ENCODE measurements at regions of chr3 and their contacts with region 1.

Region 1: GRCh38 chr3:149352556-149352955 is 19.1 kb upstream of the TM4SF18 start:
- DNase-seq: no peak
- H3K4me3 ChIP-seq: no peak overlapping the region
- CTCF ChIP-seq: peak; percentile 73

Region 2: DNA sequence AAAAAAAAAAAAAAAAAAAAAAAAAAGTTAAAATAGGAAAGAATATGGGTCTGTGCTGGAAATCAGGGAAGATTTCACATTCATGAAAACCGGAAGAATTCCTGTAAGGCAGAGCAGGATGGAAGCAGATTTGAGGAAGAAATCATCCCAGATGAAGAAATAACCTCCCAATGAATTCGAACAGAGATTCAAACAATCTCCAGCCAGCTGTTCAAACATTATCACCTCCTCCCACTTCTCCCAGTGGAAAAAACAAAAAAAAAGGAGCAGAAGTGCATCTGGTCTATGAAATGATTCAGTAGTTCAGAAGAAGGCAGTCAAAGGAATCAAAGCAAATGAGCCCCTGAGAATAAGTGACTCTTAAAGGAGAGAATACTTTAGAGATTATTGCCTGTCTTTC is 164.1 kb before region 1 on chr3:
- CTCF ChIA-PET with region 1: no interaction called
- POLR2A ChIA-PET with region 1: no interaction called
- DNase-seq: no peak
- H3K4me3 ChIP-seq: no peak overlapping the region
- CTCF ChIP-seq: no peak

Region 3: GRCh38 chr3:149330609-149331331 is 21.8 kb before region 1 on chr3:
- CTCF ChIA-PET with region 1: interaction called, 17 read pairs
- POLR2A ChIA-PET with region 1: no interaction called
- DNase-seq: no peak
- H3K4me3 ChIP-seq: no peak overlapping the region
- CTCF ChIP-seq: no peak

Region 4: DNA sequence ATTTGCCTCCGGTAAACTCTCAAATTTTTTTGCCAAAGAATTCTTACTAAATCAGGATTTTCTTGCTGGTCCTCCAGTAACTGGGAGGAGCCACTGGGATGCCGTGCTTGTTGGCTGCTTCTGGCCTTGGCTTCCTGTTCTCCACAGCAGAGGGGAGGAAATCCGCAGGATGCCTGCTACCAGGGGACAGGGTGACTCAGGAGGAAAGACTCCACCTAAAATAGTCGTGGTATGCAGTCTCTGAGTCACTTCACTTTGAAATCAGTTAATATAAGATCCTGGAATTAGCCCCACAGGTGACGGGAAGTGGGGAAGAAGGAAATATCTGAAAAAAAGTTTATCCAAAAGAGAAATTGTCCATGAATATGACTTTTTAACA is 12.6 kb before region 1 on chr3:
- CTCF ChIA-PET with region 1: interaction called, 30 read pairs
- POLR2A ChIA-PET with region 1: no interaction called
- DNase-seq: peak; percentile 76
- H3K4me3 ChIP-seq: no peak overlapping the region
- CTCF ChIP-seq: no peak

Region 5: GRCh38 chr3:149363053-149363452 is 10.5 kb after region 1 on chr3:
- CTCF ChIA-PET with region 1: interaction called, 52 read pairs
- POLR2A ChIA-PET with region 1: no interaction called
- DNase-seq: no peak
- H3K4me3 ChIP-seq: no peak overlapping the region
- CTCF ChIP-seq: no peak

Region 6: DNA sequence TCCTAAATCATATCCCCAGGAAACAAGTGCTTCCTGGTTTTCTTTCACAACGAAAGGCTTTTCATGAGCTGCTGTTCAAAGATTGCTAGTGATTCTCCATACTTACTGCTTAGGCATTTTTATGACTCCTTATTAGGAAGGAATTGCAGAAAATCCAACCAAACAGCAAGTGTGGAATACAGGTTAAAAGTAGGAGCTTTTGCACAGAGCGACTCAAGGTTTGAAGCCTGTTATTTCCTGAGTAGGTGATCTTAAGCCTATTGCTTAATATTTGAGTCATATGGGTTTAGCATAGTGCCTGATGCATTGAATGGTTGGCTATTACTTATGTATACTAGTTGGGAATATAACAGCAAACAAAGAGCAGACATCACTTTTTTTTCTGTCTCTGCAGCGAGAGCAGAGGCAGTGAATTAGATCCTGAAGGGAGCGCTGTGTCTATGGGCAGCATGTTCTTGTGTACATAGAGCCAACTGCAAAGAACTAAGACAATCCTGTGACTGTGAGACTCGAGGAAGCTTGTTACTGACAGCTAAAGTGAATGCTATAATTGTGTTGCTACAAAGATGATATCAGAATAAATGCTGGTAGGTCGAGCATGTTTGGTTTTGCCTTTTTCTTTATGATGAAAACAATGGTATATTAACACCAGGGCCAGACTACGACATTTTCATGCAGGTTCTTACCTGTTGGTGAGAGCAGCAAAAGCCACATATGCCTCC is 18.6 kb after region 1 on chr3:
- CTCF ChIA-PET with region 1: interaction called, 52 read pairs
- POLR2A ChIA-PET with region 1: no interaction called
- DNase-seq: no peak
- H3K4me3 ChIP-seq: no peak overlapping the region
- CTCF ChIP-seq: no peak

Region 7: GRCh38 chr3:149401215-149401925 is 48.8 kb after region 1 on chr3:
- CTCF ChIA-PET with region 1: no interaction called
- POLR2A ChIA-PET with region 1: no interaction called
- DNase-seq: no peak
- H3K4me3 ChIP-seq: no peak overlapping the region
- CTCF ChIP-seq: no peak

Region 8: DNA sequence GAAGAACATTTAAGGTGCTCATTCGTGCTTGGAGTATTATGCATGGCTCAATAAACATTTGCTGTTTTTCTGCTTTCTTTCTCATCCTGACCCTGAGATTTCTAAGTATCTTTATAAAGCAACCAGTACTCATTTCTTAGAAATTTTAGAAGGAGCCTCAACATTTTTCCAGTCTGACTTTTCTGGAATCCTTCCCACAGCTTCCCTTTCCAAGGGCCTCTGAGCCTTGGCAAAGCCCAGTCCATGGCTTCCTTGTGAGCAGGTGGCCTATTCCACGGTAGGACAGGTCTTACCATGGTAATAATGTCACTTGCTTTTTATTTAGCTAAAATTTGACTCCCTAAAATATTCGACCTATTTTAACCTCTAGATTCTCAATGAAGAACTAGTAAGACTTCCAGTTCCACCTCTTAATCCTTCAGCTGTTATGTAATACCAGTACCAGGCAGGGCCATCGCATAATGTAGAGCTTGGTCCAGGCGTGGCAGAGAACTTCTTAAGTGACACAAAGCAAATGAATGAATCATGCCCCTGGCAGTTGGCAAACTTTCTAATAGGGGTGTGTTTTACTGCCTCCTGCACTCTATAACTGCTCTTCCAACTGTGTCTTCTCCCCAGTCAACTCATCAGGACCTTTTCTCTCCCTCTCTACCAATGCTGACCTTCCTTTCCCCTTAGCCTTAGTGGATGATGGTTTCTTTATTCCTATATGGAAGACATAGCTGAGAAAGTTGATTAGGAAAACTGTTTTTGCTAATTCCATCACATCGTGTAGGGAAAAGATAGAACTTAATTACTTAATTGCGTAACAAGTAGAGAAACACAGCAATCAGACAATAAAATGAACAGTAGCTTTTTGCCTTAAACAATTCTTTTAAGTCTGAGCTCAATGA is 121.0 kb after region 1 on chr3:
- CTCF ChIA-PET with region 1: interaction called, 46 read pairs
- POLR2A ChIA-PET with region 1: no interaction called
- DNase-seq: peak; percentile 55
- H3K4me3 ChIP-seq: no peak overlapping the region
- CTCF ChIP-seq: no peak

Region 9: GRCh38 chr3:149487598-149488197 is 135.1 kb after region 1 on chr3:
- CTCF ChIA-PET with region 1: interaction called, 19 read pairs
- POLR2A ChIA-PET with region 1: no interaction called
- DNase-seq: no peak
- H3K4me3 ChIP-seq: no peak overlapping the region
- CTCF ChIP-seq: no peak

Measured in AG04449 (cell line).